Activated naive CD4-positive, alpha-beta T cell treated with anti-CD3 and anti-CD28 coated beads, Interleukin-2, amount 10 ng/mL, durations not matched to agents 7 days and 5 days (primary cell): ENCODE measurements at regions of chr1 and their contacts with region 1.

Region 1: GRCh38 chr1:163315773-163316374 is 5.9 kb upstream of the NUF2 start:
- DNase-seq: peak; percentile 65
- H3K4me3 Mint-ChIP-seq: no peak overlapping the region
- H3K27ac Mint-ChIP-seq: no peak overlapping the region
- H3K4me1 Mint-ChIP-seq: peaks cover 9% of the 10 kb centered on the region
- H3K27me3 Mint-ChIP-seq: no peaks in the 10 kb centered on the region

Region 2: DNA sequence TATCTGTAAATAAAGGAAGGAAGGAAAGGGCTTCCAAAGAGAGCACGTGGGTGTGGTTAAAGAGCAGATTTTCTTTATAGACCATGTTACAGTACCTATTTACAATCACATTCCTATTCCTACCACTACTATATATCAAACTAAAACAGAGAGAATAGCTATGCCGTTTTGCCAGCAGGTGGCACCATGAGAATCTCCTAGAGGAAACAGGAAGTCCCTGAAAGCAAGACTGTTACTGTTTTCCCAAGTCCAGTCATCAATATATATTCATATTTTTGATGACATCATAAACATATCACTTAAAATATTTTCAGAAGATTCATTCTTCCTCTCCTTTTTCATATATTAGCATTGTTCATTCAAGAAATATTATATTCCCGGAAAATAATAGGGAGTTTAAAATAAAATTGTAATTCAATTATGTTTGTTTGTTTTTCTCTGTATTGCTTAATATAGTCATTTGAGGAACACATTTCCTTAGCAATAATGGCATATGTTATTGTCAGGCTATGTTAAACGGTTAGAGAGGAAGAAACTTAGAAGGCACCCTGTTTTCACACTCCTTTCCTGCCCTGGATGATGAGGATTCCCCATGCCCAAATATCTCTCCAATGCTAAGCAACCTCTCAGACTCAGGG is 461.5 kb before region 1 on chr1:
- CTCF ChIA-PET with region 1: interaction called, 31 read pairs
- DNase-seq: peak; percentile 71
- H3K4me3 Mint-ChIP-seq: no peak overlapping the region
- H3K27ac Mint-ChIP-seq: no peak overlapping the region
- H3K4me1 Mint-ChIP-seq: no peaks in the 10 kb centered on the region
- H3K27me3 Mint-ChIP-seq: peaks cover 9% of the 10 kb centered on the region

Region 3: DNA sequence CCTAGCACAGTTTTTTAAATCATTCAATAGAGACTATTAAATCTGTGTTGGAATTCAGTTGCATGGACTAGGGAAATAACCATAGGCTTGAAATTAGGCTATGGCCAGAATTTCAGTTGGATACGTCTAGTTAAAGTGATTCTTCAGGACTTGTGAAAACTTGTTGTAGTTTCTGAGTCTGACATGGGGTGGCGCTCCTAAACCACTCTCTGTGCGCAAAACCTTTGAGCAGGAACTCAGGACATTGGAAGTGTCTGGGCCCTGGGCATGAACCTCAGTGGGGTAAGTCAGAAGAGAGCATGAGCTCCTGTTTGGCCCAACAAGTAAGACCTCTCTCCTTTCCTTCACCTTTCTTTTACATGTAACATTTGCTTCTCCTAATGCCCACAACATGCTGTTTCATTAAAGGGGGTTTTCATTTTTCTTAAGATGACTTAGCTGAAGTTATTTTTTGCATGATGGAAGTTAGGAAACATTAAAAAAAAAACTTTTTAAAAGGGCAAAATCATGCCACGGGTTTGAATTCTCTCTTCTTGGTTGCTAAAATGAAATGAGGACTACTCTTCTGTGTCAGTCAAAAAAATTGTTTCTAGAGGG is 437.8 kb before region 1 on chr1:
- CTCF ChIA-PET with region 1: interaction called, 12 read pairs
- DNase-seq: peak; percentile 54
- H3K4me3 Mint-ChIP-seq: no peak overlapping the region
- H3K27ac Mint-ChIP-seq: no peak overlapping the region
- H3K4me1 Mint-ChIP-seq: no peaks in the 10 kb centered on the region
- H3K27me3 Mint-ChIP-seq: peaks cover 18% of the 10 kb centered on the region

Region 4: DNA sequence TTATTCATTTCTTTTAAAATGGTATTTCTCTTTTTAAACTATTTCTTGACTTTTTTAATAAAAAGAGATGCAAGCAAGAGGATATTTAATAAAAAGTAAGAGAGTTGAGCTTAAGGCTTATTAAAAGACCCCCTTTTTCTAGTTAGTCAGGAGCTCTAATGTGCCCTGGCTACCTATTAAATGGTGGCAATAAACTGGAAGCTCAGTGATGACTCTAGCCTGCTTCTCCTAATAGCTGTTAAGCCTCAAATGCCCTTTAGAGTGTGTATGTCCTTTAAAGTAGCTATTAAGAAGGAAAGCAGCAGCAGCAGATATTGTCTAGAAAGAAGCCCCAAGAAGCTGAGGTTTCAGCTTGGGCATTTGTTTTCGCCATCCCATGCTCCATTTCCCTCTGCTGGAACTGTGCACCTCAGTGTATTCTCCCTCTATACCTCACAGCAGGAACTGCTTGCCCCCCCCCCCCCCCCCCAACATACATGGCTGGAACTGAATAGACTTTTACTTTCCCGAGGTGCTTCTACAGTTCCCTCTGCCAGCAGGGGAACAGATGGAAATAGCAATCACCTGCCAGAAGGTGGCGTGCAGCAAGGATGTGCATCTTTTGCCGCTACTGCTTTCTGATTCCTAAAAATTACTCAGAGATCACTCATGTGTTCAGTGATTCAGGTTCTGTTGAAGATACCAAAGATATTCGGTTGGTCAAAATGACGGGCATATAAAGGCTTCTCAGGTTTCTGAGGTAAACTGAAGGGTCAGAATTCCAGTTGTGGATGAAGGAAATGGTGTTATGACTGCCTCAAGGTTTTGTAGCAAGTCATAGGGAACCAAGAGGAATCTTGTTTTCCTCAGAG is 244.2 kb before region 1 on chr1:
- CTCF ChIA-PET with region 1: interaction called, 43 read pairs
- DNase-seq: peak; percentile 65
- H3K4me3 Mint-ChIP-seq: no peak overlapping the region
- H3K27ac Mint-ChIP-seq: no peak overlapping the region
- H3K4me1 Mint-ChIP-seq: no peaks in the 10 kb centered on the region
- H3K27me3 Mint-ChIP-seq: peaks cover 19% of the 10 kb centered on the region

Region 5: GRCh38 chr1:163174524-163175437 is 141.1 kb before region 1 on chr1:
- CTCF ChIA-PET with region 1: interaction called, 10 read pairs
- DNase-seq: peak; percentile 63
- H3K4me3 Mint-ChIP-seq: no peak overlapping the region
- H3K27ac Mint-ChIP-seq: no peak overlapping the region
- H3K4me1 Mint-ChIP-seq: no peaks in the 10 kb centered on the region
- H3K27me3 Mint-ChIP-seq: peaks cover 9% of the 10 kb centered on the region

Region 6: GRCh38 chr1:163300568-163300967 is 15.3 kb before region 1 on chr1:
- CTCF ChIA-PET with region 1: interaction called, 16 read pairs
- DNase-seq: no peak
- H3K4me3 Mint-ChIP-seq: no peak overlapping the region
- H3K27ac Mint-ChIP-seq: no peak overlapping the region
- H3K4me1 Mint-ChIP-seq: no peaks in the 10 kb centered on the region
- H3K27me3 Mint-ChIP-seq: no peaks in the 10 kb centered on the region